GM12878 (cell line): ENCODE measurements at regions of chr3 and their contacts with region 1.

Region 1: GRCh38 chr3:55675478-55675877 is 188.4 kb upstream of the WNT5A start:
- DNase-seq: peak; percentile 93
- ATAC-seq: peak; percentile 99
- H3K4me3 ChIP-seq: peak overlapping the region; percentile 17; the same call in 1 of the 2 replicates
- H3K27ac ChIP-seq: peak overlapping the region; percentile 55
- H3K4me1 ChIP-seq: peaks cover 41% of the 10 kb centered on the region
- H3K27me3 ChIP-seq: no peaks in the 10 kb centered on the region
- CTCF ChIP-seq: peak; percentile 6 to 33 (median 21); a peak in 1 of 6 replicates
- EP300 ChIP-seq: peak; percentile 67 to 83; a peak in 3 of 4 replicates
- POLR2A ChIP-seq: no peak
- RAD21 ChIP-seq: peak; percentile 28; the same call in 1 of the 2 replicates

Region 2: DNA sequence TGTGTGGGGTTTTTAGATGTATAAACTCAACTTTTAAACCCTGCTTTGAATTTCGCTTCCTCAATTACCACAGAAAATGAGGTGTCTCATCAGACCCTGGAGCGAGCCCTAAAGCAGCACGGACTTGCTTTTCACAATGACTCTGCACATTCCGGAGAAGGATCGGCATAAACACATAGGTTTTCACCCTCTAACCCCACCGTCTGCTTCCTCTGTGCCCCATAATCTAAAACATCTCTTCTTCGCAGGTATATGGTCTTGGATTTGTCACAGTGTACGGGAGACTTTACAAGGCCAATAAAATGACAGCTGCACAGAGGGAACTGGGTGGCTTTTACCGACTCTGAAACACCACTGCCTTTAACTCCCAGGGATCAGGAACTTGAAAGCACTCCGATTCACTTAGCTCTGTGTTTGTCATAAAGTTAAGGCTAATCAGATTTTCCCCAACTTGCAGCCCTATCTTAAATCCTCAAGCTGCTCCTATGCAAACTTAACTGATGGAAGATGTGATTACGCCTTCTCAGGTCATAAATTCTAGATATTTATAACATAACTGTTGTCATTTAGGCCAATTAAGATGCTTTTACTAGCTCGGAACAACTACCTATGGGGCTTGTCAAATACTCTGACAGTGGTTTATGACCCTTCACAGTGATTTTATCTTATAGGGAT is 55.0 kb before region 1 on chr3:
- CTCF ChIA-PET with region 1: interaction called, 3 read pairs
- POLR2A ChIA-PET with region 1: no interaction called
- RAD21 ChIA-PET with region 1: no interaction called
- SMC1A ChIA-PET with region 1: interaction called, 3 read pairs
- in situ Hi-C with region 1: no loop called
- intact Hi-C with region 1: loop called (anchors 5 kb)
- DNase-seq: peak; percentile 59
- ATAC-seq: peak; percentile 84
- H3K4me3 ChIP-seq: peak overlapping the region; percentile 18; the same call in 1 of the 2 replicates
- H3K27ac ChIP-seq: peak overlapping the region; percentile 75
- H3K4me1 ChIP-seq: peaks cover 47% of the 10 kb centered on the region
- H3K27me3 ChIP-seq: no peaks in the 10 kb centered on the region
- CTCF ChIP-seq: no peak
- EP300 ChIP-seq: no peak
- POLR2A ChIP-seq: no peak
- RAD21 ChIP-seq: no peak

Region 3: GRCh38 chr3:55690726-55691125 is 15.2 kb after region 1 on chr3:
- CTCF ChIA-PET with region 1: interaction called, 6 read pairs
- POLR2A ChIA-PET with region 1: interaction called, 4 read pairs
- RAD21 ChIA-PET with region 1: interaction called, 4 read pairs
- SMC1A ChIA-PET with region 1: interaction called, 23 read pairs
- in situ Hi-C with region 1: no loop called
- intact Hi-C with region 1: no loop called
- DNase-seq: peak; percentile 42
- ATAC-seq: peak; percentile 83
- H3K4me3 ChIP-seq: 0 out of 2 replicates have a peak overlapping the region, but pooled peaks have one; percentile 3
- H3K27ac ChIP-seq: no peak overlapping the region
- H3K4me1 ChIP-seq: peaks cover 46% of the 10 kb centered on the region
- H3K27me3 ChIP-seq: no peaks in the 10 kb centered on the region
- CTCF ChIP-seq: no peak
- EP300 ChIP-seq: no peak
- POLR2A ChIP-seq: no peak
- RAD21 ChIP-seq: no peak